Gastrocnemius medialis (tissue), 4 donors: ENCODE measurements at regions of chr16 and their contacts with region 1.

Region 1: DNA sequence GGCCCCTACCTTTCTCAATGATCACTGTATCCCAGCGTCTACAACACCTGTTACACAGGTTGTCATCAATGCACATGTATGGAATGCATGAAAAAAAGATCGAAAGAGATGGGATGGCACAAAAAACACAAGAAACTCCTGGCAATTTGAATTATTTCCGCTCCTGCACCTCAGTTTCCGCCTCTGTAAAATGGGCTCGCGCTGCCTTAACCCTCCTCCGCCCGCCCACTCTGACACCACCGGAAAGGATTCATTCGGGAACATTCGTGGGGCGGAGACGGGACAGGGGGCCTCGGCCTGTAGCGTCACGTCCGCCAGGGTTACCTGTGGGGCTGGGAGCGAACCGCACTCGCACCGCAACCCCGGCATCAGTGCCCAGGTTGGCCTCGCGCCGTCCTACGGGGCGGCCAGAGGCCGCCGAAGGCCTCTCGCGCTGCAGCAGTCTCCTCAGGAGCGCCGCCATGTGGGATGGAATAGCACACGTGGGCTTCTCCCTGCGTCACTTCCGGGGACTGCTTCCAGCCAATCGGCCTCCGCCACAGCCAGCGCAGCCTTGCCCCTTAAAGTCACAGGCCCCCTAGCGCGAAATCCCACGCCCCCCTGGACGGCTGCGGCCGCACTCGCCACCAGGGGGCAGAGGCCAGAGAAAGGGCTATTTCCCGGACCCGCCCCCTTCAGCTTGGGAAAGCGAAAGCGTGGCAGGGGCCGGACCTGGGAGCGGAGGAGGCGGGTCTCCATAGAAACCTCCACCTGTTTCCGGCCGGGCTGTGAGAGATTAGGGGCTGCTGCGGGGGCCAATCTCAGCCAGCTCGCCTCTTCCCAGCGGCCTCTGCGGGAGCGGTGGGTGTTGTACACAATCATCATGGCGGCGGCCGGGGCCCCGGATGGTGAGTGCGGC is at the starts of genes EARS2 and UBFD1:
- DNase-seq: peak; percentile 99
- ATAC-seq: peak; percentile 87 to 90
- H3K4me3 ChIP-seq: peak within 1 kb of the TSS; percentile 63 to 84 (median 74)
- H3K27ac ChIP-seq: peak within 1 kb of the TSS; percentile 89 to 98 (median 96)
- H3K4me1 ChIP-seq: peaks cover 44 to 46% of the 10 kb centered on the region in 2 donors
- H3K27me3 ChIP-seq: no peaks in the 10 kb centered on the region
- CTCF ChIP-seq: peak; percentile 96 to 99 (median 98)
- POLR2A ChIP-seq: peak; percentile 84 to 88
- total RNA-seq, gene EARS2: 8.4 to 39.6 (median 19.3) TPM
- total RNA-seq, gene UBFD1: 133 to 367 (median 317) TPM

Region 2: GRCh38 chr16:23452572-23453337 is 104.4 kb before region 1 on chr16 and contains the start of gene COG7:
- in situ Hi-C with region 1: no loop called
- intact Hi-C with region 1: loop called (anchors 2 kb)
- DNase-seq: peak; percentile 69 to 79
- ATAC-seq: peak; percentile 93 to 94
- H3K4me3 ChIP-seq: peak within 1 kb of the TSS; percentile 74 to 90 (median 78)
- H3K27ac ChIP-seq: peak within 1 kb of the TSS; percentile 77 to 87 (median 82)
- H3K4me1 ChIP-seq: peaks cover 4 to 33% of the 10 kb centered on the region in 2 donors
- H3K27me3 ChIP-seq: no peaks in the 10 kb centered on the region
- CTCF ChIP-seq: no peak
- POLR2A ChIP-seq: no peak
- total RNA-seq, gene COG7: 6.6 to 12.9 (median 7.1) TPM

Region 3: DNA sequence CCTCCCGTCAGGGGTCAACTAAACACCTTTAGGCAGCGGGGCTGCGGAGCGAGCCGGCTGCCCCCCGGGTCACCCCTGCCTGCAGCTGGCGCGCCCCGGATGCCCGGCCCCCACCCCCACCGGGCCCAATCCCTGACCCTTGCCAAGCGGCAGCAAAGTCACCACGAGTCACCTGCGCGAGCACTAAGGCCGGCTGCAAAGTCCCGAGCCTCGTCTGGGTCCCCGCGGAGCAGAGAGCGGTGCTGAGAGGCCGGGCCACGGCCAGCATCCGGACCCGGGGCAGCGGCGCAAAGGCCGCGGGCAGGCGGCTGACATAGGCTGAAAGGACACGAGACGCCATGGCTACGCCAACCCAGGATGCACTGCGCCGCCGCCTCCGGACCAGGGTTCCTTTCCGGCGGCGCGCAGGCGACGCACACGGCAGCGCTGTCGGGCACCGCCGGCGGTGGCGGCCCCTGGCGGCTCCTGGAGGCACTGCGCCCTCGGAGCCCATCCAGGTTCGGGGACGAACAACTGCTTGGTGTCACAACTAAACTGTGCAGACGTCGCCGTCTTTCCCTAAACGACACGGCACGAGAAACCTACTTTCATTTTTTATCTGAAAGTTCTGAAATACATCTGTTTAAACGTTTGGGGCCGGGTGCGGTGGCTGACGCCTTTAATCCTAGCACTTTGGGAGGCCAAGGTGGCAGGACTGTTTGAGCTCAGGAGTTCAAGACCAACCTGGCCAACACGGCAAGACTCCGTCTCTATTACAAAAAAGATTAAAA is 39.0 kb after region 1 on chr16 and contains the start of gene NDUFAB1:
- in situ Hi-C with region 1: loop called in 3 of 4 experiments (anchors 5 kb)
- intact Hi-C with region 1: loop called (anchors 1 kb)
- DNase-seq: peak; percentile 82 to 89
- ATAC-seq: peak; percentile 83 to 87
- H3K4me3 ChIP-seq: peak within 1 kb of the TSS; percentile 88 to 100 (median 97)
- H3K27ac ChIP-seq: peak within 1 kb of the TSS; percentile 94 to 99 (median 96)
- H3K4me1 ChIP-seq: peaks cover 26 to 35% of the 10 kb centered on the region in 2 donors
- H3K27me3 ChIP-seq: no peaks in the 10 kb centered on the region
- CTCF ChIP-seq: peak; percentile 93 to 100 (median 100)
- POLR2A ChIP-seq: peak; percentile 8 to 42
- total RNA-seq, gene NDUFAB1: 166 to 400 (median 323) TPM

Region 4: GRCh38 chr16:24504472-24505345 is 947.6 kb after region 1 on chr16:
- in situ Hi-C with region 1: no loop called
- intact Hi-C with region 1: loop called (anchors 10 kb)
- DNase-seq: peak in 1 of 2 donors; percentile 8
- ATAC-seq: peak; percentile 56 to 65
- H3K4me3 ChIP-seq: no peak overlapping the region
- H3K27ac ChIP-seq: no peak overlapping the region
- H3K4me1 ChIP-seq: peaks cover 3 to 7% of the 10 kb centered on the region in 2 donors
- H3K27me3 ChIP-seq: no peaks in the 10 kb centered on the region
- CTCF ChIP-seq: peak; percentile 33 to 72 (median 59)
- POLR2A ChIP-seq: no peak